ENCODE measurements at regions of chr9 and their contacts with region 1.

Region 1: GRCh38 chr9:17116400-17116837 is 18.4 kb upstream of the CNTLN start:
- DNase-seq: no peak
- H3K4me3 ChIP-seq: no peak overlapping the region
- H3K27ac ChIP-seq: no peak overlapping the region
- H3K4me1 ChIP-seq: no peaks in the 10 kb centered on the region
- H3K27me3 ChIP-seq: no peaks in the 10 kb centered on the region
- CTCF ChIP-seq: peak in 7 of 11 experiments; percentile 19 to 51 (median 40)
- POLR2A ChIP-seq: no peak

Region 2: GRCh38 chr9:17462869-17463464 is 346.5 kb after region 1 on chr9:
- intact Hi-C with region 1: loop called (anchors 5 kb)
- DNase-seq: no peak
- H3K4me3 ChIP-seq: no peak overlapping the region
- H3K27ac ChIP-seq: no peak overlapping the region
- H3K4me1 ChIP-seq: no peaks in the 10 kb centered on the region
- H3K27me3 ChIP-seq: no peaks in the 10 kb centered on the region
- CTCF ChIP-seq: peak in 9 of 11 experiments; percentile 4 to 76 (median 58)
- POLR2A ChIP-seq: no peak

Measured in spleen (tissue), 13 donors.